ENCODE measurements at regions of chr9 and their contacts with region 1.

Region 1: GRCh38 chr9:136410500-136411287 is at the starts of genes ENTR1 and PMPCA:
- DNase-seq: peak; percentile 93 to 94 (median 93)
- H3K4me3 ChIP-seq: peak within 1 kb of the TSS; percentile 71 to 85
- H3K4me3 Mint-ChIP-seq: peak within 1 kb of the TSS; percentile 87 to 92 (median 90)
- H3K27ac ChIP-seq: peak within 1 kb of the TSS; percentile 93
- H3K27ac Mint-ChIP-seq: peak within 1 kb of the TSS; percentile 81 to 96 (median 94)
- H3K4me1 ChIP-seq: peaks cover 35% of the 10 kb centered on the region
- H3K4me1 Mint-ChIP-seq: peaks cover 23 to 59% (median 40%) of the 10 kb centered on the region in 4 donors
- H3K27me3 ChIP-seq: no peaks in the 10 kb centered on the region
- H3K27me3 Mint-ChIP-seq: no peaks in the 10 kb centered on the region
- total RNA-seq, gene ENTR1: 82.9 to 85.9 TPM
- total RNA-seq, gene PMPCA: 71.8 to 73.3 TPM

Region 2: DNA sequence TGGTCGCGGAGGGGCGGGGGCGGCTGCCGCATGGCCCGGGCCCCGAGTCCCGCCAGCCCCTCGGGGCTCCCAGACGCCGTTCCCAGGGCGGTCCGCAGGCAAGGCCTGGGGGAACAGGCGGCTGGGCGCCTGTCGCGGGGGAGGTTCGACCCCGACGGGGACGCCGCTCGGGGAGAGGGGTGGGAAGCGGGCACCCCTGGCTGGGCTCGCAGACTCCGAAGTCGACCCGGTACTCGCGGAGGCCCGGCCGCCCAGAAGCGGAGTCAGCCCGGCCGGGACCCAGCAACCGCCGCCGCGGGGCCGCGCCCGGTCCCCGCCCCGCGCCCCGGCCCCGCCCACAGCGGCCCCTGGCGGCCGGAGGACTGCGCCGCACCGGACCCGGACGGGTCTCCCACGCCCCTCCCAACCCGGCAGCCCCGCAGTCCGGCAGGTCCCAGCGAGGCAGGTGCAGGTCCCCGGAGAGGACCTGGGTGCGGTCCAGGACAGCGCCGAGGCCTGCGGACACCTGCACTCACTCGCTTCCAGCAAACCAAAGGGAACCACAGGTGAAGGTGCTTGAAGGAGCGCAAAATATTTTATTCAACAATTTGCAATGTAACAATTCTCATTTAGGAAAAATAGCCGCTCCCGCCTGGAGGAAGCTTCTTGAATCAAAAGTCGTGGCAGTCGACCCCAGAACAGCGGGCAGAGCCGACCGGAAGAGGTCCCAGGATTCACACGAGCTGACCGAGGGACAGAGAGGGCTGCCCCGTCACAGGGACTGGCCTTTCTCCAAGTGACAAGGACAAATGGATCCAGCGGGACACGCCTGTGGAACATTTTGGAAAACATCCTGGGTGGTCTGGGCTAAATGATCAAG is 29.1 kb after region 1 on chr9 and contains the start of gene INPP5E:
- CTCF ChIA-PET with region 1: interaction called, 3 read pairs
- POLR2A ChIA-PET with region 1: interaction called, 16 read pairs
- intact Hi-C with region 1: no loop called
- DNase-seq: peak; percentile 69 to 89 (median 83)
- H3K4me3 ChIP-seq: peak within 1 kb of the TSS in 1 of 2 donors; percentile 66
- H3K4me3 Mint-ChIP-seq: peak within 1 kb of the TSS; percentile 86 to 91 (median 88)
- H3K27ac ChIP-seq: peak within 1 kb of the TSS; percentile 74
- H3K27ac Mint-ChIP-seq: peak within 1 kb of the TSS in 6 of 7 donors; percentile 66 to 95 (median 91)
- H3K4me1 ChIP-seq: peaks cover 29% of the 10 kb centered on the region
- H3K4me1 Mint-ChIP-seq: peaks cover 16 to 36% (median 25%) of the 10 kb centered on the region in 4 donors
- H3K27me3 ChIP-seq: no peaks in the 10 kb centered on the region
- H3K27me3 Mint-ChIP-seq: no peaks in the 10 kb centered on the region
- total RNA-seq, gene INPP5E: 29.1 to 31.2 TPM